ENCODE measurements at regions of chr7 and their contacts with region 1.

Region 1: GRCh38 chr7:129091484-129092002 is 36.6 kb upstream of the TNPO3 start:
- DNase-seq: peak; percentile 91
- ATAC-seq: peak; percentile 87
- H3K4me3 Mint-ChIP-seq: no peak overlapping the region
- H3K27ac Mint-ChIP-seq: no peak overlapping the region
- H3K4me1 Mint-ChIP-seq: peaks cover 39% of the 10 kb centered on the region
- H3K27me3 Mint-ChIP-seq: peaks cover 2% of the 10 kb centered on the region

Region 2: DNA sequence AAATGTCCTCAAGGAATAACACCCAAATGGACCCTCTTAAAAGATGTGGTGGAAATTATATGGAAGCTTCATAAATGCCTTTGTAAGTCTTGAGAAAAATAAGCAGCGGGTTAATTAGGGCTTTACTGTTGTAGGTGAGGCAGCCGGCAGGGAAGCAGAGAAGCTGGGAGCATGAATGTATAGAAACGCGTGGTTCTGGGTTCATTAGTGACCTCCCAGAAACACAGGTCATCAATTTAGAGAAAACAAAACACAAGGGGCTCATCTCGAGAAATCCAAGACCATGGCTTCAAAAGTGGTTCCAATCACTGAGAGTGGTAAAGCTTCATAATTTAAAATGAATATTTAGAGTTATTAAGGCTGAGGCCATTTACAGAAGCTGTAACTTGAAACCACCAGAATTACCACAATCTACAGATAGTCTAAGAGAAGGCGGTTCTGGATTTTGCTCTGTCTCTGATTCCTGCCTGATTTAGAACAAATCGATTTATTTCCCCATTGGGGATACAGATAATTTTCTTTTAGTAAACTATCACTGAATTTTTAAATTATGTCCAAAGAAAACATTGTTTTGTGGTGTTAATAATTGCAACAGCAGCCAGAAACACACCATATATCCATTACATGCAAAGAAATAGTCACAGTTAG is 398.8 kb before region 1 on chr7:
- CTCF ChIA-PET with region 1: no interaction called
- POLR2A ChIA-PET with region 1: no interaction called
- DNase-seq: no peak
- ATAC-seq: no peak
- H3K4me3 Mint-ChIP-seq: no peak overlapping the region
- H3K27ac Mint-ChIP-seq: no peak overlapping the region
- H3K4me1 Mint-ChIP-seq: peaks cover 8% of the 10 kb centered on the region
- H3K27me3 Mint-ChIP-seq: peaks cover 31% of the 10 kb centered on the region

Region 3: GRCh38 chr7:128849804-128850490 is 241.6 kb before region 1 on chr7:
- CTCF ChIA-PET with region 1: no interaction called
- POLR2A ChIA-PET with region 1: no interaction called
- DNase-seq: no peak
- ATAC-seq: no peak
- H3K4me3 Mint-ChIP-seq: no peak overlapping the region
- H3K27ac Mint-ChIP-seq: no peak overlapping the region
- H3K4me1 Mint-ChIP-seq: no peaks in the 10 kb centered on the region
- H3K27me3 Mint-ChIP-seq: no peaks in the 10 kb centered on the region

Region 4: DNA sequence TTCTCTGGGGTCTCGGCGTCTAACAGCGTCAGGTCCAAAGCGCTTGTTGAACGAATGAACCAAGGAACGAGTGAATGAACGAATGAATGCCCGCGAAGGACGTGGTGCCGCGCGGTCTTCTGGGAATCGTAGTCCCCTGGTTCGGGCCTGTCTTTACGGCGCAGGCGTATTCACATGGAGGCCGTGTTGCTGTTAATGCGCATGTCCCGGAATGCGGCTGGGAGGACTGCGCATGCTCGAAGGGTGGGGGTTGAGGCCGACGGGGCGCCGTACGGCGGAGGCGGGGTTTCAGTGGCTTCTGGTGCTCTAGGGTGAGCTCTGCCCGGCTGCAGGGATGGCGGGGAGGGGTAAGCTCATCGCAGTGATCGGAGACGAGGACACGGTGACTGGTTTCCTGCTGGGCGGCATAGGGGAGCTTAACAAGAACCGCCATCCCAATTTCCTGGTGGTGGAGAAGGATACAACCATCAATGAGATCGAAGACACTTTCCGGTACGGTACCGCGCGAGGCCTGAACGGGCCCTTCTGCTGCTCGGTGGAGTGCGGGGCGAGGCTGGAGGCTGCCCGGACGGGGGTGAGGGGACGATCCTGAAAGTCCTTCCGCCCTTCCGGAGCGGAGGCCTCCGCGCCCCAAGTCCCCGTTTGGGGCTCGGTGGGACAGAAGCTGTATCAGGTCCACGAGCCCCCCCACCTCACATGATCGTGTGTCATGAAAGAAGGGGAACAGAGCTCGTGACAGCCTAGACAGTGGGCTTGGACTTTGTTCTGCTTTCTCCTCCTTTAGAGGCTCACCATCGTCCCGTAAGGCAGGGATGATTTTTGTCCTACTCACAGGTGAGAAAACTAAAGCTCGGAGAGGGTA is 228.7 kb before region 1 on chr7 and contains the start of gene ATP6V1F:
- CTCF ChIA-PET with region 1: interaction called, 21 read pairs
- POLR2A ChIA-PET with region 1: no interaction called
- DNase-seq: peak; percentile 99
- ATAC-seq: peak; percentile 94
- H3K4me3 Mint-ChIP-seq: peak within 1 kb of the TSS; percentile 90
- H3K27ac Mint-ChIP-seq: peak within 1 kb of the TSS; percentile 92
- H3K4me1 Mint-ChIP-seq: peaks cover 19% of the 10 kb centered on the region
- H3K27me3 Mint-ChIP-seq: peaks cover 1% of the 10 kb centered on the region
- total RNA-seq, gene ATP6V1F: 130 to 138 TPM

Region 5: DNA sequence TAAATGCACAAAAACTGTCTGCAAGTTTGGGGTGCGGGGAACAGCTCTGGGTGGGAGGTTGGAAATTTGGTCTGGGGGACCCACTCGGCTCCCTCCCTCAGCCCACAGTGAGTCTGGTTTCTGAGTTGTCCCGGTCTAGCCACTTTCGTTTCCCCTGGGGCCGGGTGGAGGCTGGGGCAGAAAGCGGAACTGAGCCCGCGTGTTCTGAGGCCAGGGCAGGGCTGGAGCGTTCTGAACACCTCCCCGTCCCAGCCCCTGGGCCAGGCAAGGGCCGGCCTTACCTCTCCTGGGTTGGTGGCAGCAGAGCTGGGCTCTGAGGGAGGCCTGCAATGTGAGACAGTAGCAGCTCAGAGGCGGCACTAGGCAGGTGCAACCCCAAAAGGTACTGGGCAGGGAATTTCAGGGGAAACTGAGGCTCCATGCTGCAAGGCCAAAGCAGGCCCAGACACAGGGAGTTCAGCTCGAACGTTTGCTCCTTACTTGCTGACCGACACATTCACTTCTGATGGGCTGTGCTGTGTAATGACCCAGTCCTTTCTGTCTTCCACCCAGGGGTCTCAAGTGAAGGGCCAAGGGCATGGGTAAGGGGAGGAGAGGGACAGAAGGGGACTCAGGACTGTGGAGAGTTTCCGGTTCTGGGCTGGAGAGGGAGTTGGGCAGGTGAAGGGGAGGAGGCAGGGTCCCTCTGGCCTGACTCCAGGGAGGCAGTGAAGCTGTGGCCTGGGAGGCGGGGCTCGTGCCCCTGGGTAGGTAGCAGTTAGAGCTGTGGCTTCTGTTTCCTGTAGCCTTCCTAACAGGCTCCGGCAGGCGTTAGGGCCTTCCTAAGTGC is 150.8 kb before region 1 on chr7:
- CTCF ChIA-PET with region 1: interaction called, 22 read pairs
- POLR2A ChIA-PET with region 1: no interaction called
- DNase-seq: peak; percentile 54
- ATAC-seq: peak; percentile 43
- H3K4me3 Mint-ChIP-seq: peak overlapping the region; percentile 64
- H3K27ac Mint-ChIP-seq: peak overlapping the region; percentile 78
- H3K4me1 Mint-ChIP-seq: peaks cover 40% of the 10 kb centered on the region
- H3K27me3 Mint-ChIP-seq: peaks cover 13% of the 10 kb centered on the region

Region 6: DNA sequence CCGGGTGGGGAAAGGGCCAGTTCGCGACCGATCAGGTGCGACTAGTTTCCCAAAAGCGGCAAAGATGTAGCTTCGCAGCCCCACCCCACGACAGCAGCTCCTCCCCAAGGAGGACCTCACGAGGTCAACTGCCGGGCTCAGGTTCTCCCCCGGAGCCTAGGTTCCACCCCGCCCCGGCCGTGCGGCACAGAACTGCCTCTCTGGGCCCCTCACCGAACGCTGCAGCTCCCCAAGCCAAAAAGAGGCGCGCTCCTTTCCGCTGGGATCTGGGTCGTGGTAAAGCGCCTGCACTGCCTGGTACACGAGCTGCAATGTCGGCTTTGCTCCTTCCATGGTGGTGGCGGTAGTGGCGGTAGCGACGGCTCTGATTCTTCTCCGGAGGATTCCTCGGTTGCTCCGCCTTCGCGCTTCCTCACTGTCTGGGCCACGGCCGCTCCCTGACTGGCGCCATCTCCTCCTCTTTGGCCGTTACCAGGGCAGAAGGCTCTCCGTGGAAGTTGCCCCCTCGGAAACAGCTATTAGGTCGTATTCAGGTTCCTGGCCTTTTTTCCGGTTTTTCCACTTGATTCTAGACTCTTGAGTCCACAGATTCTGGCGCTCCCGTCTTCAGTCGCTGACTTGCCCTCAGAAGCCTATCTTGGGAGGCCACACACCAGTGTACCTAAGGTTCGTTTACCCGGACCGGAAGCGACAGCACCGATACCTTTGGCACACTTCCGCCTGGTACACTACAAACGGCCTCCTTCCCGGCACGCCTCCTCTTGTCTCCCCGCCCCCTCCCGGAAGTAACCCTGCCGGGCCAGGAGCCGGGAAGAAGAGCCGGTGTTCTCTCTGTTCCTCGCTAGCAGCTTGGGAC is 36.9 kb before region 1 on chr7 and contains the start of gene TNPO3:
- CTCF ChIA-PET with region 1: interaction called, 29 read pairs
- POLR2A ChIA-PET with region 1: interaction called, 8 read pairs
- DNase-seq: peak; percentile 93
- ATAC-seq: peak; percentile 91
- H3K4me3 Mint-ChIP-seq: peak within 1 kb of the TSS; percentile 96
- H3K27ac Mint-ChIP-seq: peak within 1 kb of the TSS; percentile 100
- H3K4me1 Mint-ChIP-seq: peaks cover 32% of the 10 kb centered on the region
- H3K27me3 Mint-ChIP-seq: peaks cover 13% of the 10 kb centered on the region
- total RNA-seq, gene TNPO3: 47.2 to 47.9 TPM

Region 7: DNA sequence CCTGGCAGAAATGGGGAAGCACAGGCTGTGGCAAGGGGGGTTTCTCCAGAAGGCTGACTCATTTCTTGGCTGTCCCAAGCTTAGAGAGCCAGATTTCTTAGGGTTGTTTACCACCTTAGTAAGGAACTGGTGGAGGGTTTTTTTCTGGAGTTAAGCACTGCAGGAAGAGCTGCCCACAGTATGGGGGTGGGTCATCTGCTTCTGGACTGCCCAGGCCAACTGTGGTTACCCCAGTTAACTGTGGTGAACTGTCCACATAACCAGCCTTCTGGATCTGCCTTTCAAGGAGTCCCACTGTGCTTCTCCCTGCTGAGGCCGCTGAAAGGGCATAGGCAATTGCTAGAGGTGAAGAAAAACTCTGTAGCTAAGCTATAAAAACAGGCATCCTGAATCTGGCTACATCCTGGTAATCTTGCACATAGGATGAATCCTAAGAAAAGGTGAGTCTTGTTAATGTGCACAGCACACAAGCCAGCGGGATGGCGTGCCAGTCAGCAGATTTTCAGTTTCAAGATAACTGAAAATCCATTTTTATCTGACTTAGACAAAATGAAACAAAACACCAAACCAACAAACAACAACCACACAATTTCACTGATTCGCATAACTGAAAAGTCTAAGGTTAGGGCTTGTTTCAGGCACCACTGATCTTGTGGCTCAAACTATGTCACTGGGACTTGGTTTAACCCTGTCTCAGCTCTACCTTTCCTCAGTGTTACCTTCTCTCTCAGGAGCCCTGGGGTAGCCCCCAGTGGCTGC is 31.4 kb after region 1 on chr7:
- CTCF ChIA-PET with region 1: interaction called, 16 read pairs
- POLR2A ChIA-PET with region 1: no interaction called
- DNase-seq: no peak
- ATAC-seq: peak; percentile 44
- H3K4me3 Mint-ChIP-seq: no peak overlapping the region
- H3K27ac Mint-ChIP-seq: peak overlapping the region; percentile 60
- H3K4me1 Mint-ChIP-seq: peaks cover 21% of the 10 kb centered on the region
- H3K27me3 Mint-ChIP-seq: peaks cover 8% of the 10 kb centered on the region

Region 8: GRCh38 chr7:129157651-129158050 is 66.1 kb after region 1 on chr7:
- CTCF ChIA-PET with region 1: interaction called, 13 read pairs
- POLR2A ChIA-PET with region 1: no interaction called
- DNase-seq: no peak
- ATAC-seq: no peak
- H3K4me3 Mint-ChIP-seq: no peak overlapping the region
- H3K27ac Mint-ChIP-seq: no peak overlapping the region
- H3K4me1 Mint-ChIP-seq: no peaks in the 10 kb centered on the region
- H3K27me3 Mint-ChIP-seq: no peaks in the 10 kb centered on the region